ENCODE measurements at regions of chr17 and their contacts with region 1.

Region 1: GRCh38 chr17:68435876-68436842 is 21.1 kb downstream of the WIPI1 start:
- DNase-seq: no peak
- H3K4me3 ChIP-seq: no peak overlapping the region
- CTCF ChIP-seq: peak; percentile 95

Region 2: GRCh38 chr17:68247445-68248198 is 188.5 kb before region 1 on chr17 and contains the start of gene AMZ2:
- CTCF ChIA-PET with region 1: interaction called, 20 read pairs
- POLR2A ChIA-PET with region 1: no interaction called
- DNase-seq: peak; percentile 34
- H3K4me3 ChIP-seq: peak within 1 kb of the TSS; percentile 80
- CTCF ChIP-seq: no peak

Region 3: DNA sequence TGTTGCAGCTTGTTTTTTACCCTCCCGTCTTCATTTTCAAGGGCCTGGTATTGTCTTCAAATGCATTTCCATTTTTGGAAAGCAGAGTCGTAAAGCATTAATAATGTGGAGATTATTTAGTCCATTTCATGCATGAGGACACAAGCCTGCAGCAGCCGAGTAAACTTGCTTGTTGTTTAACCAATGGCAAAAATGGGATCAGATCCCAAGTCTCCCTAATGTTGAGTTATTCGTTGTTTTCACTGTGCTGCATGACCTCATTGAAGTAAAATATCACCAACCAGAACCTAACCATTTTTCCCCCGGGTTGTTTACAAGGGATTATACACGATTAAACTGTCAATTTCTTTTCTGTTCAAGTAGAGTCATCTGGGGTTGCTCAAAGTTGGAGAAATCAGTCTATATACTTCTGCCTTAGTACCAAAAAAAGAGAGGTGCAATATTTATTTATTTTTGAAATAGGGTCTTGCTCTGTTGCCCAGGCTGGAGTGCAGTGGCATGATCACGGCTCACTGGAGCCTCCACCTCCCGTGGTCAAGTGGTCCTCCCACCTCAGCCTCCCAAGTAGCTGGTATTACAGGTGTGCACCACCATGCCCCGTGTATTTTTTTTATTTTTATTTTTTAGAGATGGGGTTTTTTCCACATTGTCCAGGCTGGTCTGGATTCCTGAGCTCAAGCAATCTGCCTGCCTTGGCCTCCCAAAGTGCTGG is 176.0 kb before region 1 on chr17:
- CTCF ChIA-PET with region 1: interaction called, 213 read pairs
- POLR2A ChIA-PET with region 1: no interaction called
- DNase-seq: no peak
- H3K4me3 ChIP-seq: no peak overlapping the region
- CTCF ChIP-seq: no peak

Region 4: DNA sequence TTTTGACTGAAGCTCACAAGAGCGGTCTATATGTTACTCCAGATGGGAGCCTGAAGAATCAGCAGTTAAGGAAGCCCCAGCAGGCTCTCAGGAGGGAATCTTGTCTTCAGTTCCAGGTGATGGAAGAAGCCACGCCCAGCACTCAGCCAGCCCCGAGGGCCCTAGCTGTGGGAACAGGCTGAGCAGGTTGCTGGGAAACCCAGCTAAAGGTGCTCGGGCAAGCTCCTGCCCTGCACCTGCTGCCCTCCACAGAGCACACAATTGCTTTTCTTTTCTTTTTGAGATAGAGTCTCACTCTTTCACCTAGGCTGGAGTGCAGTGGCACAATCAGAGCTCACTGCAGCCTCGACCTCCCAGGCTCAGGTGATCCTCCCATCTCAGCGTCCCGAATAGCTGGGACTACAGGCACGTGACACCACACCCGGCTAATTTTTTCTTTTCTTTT is 11.2 kb before region 1 on chr17:
- CTCF ChIA-PET with region 1: interaction called, 64 read pairs
- POLR2A ChIA-PET with region 1: no interaction called
- DNase-seq: no peak
- H3K4me3 ChIP-seq: no peak overlapping the region
- CTCF ChIP-seq: no peak

Region 5: DNA sequence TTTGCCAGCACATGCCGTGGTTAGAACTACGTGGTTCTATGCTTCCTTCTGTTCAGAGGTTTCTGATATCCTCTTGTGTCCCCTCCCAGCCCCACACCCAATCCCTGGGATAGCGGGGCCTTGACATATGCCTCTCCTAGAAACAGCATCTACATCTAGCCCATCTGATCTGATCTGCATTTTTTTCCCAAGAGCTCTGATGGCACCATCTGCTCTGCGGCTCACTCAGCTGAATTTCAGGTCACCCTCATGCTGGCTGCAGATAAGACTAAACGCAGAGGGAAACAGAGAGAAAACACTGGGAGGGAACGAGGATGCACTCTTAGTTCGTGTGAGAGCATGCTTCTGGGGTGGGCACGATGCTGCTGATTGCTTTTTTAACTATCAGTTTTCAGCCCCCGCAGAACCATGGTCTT is 10.5 kb after region 1 on chr17:
- CTCF ChIA-PET with region 1: interaction called, 36 read pairs
- POLR2A ChIA-PET with region 1: no interaction called
- DNase-seq: no peak
- H3K4me3 ChIP-seq: no peak overlapping the region
- CTCF ChIP-seq: no peak

Region 6: GRCh38 chr17:68457539-68458259 is 21.5 kb after region 1 on chr17:
- CTCF ChIA-PET with region 1: interaction called, 81 read pairs
- POLR2A ChIA-PET with region 1: interaction called, 4 read pairs
- DNase-seq: peak; percentile 85
- H3K4me3 ChIP-seq: peak overlapping the region; percentile 94
- CTCF ChIP-seq: no peak